PC-9 (cell line): ENCODE measurements at regions of chr20 and their contacts with region 1.

Region 1: DNA sequence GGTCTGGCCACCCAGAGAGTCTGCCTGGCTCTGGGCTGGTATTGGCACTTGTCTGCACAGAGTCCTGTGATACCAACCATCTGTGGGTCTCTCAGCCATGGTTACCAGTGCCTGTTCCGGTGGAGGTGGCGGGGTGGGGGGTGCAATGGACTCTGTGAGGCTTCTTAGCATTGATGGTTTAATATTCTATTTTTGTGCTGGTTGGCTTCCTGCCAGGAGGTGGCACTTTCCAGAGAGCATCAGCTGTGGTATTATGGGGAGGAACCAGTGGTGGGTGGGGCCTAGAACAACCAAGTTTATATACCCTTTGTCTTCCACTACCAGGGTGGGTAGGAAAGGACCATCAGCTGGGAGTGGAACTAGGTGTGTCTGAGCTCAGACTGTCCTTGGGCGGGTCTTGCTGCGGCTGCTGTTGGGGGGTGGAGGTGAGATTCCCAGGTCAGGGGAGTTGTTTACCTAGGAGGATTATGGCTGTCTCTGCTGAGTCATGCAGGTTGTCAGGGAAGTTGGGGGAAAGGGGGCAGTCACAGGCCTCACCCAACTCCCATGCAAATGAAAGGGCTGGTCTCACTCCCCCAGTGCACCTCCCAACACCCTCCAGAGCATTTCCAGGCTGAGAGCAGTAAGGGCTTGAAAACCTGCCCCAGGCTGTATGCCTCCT is 117.5 kb downstream of the FLRT3 start:
- DNase-seq: peak; percentile 84 to 92
- H3K4me3 ChIP-seq: peak overlapping the region; percentile 4; the same call in 1 of the 2 replicates
- H3K27ac ChIP-seq: peak overlapping the region; percentile 76
- H3K4me1 ChIP-seq: peaks cover 37% of the 10 kb centered on the region
- H3K27me3 ChIP-seq: no peaks in the 10 kb centered on the region
- CTCF ChIP-seq: no peak

Region 2: DNA sequence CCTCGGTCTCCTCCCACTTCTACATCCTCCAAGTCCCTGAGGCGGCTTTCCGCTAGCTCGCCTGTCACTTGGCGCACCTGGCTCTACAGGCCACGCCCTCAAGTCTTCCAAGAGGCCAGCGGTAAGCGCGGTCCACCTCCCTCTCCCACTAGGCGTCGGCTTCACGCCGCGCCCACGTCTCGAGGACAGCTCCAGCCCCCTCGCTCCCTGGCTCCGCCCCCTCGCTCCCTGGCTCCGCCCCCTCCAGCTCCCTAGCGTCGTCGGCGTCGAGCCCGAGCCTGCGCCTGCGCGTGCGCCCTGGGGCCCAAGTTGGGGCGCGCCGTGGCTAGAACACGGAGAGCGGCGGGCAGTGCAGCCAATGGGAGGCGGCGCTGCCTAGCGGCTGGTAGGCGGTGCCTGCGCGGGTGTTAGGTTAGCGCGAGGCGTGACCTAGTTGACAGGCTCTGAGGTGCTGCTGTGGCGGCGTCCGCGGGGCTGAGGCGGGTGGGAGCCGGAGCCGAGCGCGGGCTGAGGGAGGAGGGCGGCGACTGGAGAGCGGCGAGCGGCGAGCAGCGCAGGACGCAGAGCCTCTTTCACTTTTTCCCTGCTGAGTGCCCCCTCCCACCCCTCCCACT is 224.7 kb before region 1 on chr20 and contains the start of gene MACROD2:
- CTCF ChIA-PET with region 1: no interaction called
- POLR2A ChIA-PET with region 1: interaction called, 8 read pairs
- intact Hi-C with region 1: loop called (anchors 5 kb)
- DNase-seq: peak; percentile 91 to 99
- H3K4me3 ChIP-seq: peak within 1 kb of the TSS; percentile 66
- H3K27ac ChIP-seq: no peak within 1 kb of the TSS
- H3K4me1 ChIP-seq: peaks cover 10% of the 10 kb centered on the region
- H3K27me3 ChIP-seq: no peaks in the 10 kb centered on the region
- CTCF ChIP-seq: no peak
- total RNA-seq, gene MACROD2: 8.5 and 11.4 TPM in 2 replicates

Region 3: DNA sequence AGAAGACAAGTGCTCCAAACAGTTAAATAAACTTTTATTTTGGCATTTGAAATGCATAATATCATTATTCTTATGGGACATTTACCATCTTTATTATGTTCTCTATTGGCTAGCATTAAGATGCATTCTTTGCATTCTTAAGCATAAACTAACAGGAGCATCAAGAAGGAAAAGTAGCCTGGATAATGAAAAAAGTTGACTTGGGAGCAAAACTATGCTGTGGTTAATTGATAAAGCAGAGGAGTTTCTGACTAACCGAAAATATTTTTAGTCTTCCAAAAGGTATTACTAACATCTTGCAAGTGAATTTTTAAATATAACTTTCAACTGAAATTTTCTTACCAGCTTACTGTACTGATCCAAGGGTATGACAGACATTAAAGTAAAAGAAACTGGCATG is 22.8 kb before region 1 on chr20:
- CTCF ChIA-PET with region 1: no interaction called
- POLR2A ChIA-PET with region 1: interaction called, 14 read pairs
- intact Hi-C with region 1: no loop called
- DNase-seq: no peak
- H3K4me3 ChIP-seq: no peak overlapping the region
- H3K27ac ChIP-seq: no peak overlapping the region
- H3K4me1 ChIP-seq: peaks cover 3% of the 10 kb centered on the region; the same call in 1 of the 2 replicates
- H3K27me3 ChIP-seq: no peaks in the 10 kb centered on the region
- CTCF ChIP-seq: no peak

Region 4: DNA sequence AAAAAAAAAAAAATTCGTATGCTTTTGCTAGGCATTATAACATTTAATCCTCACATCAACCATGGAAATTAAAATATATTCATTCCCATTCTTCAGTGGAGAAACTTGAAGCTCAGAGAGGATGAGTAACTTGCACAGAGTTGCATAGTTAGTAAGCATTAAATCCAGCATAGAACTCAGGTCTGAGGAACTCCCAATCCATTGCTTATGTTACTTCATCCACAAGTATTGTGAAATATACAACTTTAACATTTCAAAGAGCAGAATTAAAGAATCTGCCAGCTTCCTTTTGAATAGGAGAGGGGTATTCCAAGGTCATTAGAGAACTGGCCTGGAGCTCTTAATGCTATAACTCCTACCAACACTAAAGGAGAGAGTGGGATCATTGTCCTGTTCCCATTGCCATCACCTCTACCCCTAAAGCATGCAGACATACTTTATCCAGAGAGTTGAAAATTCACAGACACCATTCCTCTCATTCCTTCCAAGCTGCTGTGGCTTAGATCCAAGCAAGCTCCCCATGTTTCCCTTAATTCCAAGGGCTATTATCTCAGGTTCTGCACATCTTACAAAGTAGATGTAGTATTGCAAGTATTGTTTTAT is 25.5 kb after region 1 on chr20:
- CTCF ChIA-PET with region 1: no interaction called
- POLR2A ChIA-PET with region 1: interaction called, 13 read pairs
- intact Hi-C with region 1: no loop called
- DNase-seq: no peak
- H3K4me3 ChIP-seq: no peak overlapping the region
- H3K27ac ChIP-seq: no peak overlapping the region
- H3K4me1 ChIP-seq: no peaks in the 10 kb centered on the region
- H3K27me3 ChIP-seq: no peaks in the 10 kb centered on the region
- CTCF ChIP-seq: no peak

Region 5: GRCh38 chr20:14331646-14332045 is 111.7 kb after region 1 on chr20:
- CTCF ChIA-PET with region 1: no interaction called
- POLR2A ChIA-PET with region 1: no interaction called
- intact Hi-C with region 1: no loop called
- DNase-seq: no peak
- H3K4me3 ChIP-seq: no peak overlapping the region
- H3K27ac ChIP-seq: no peak overlapping the region
- H3K4me1 ChIP-seq: peaks cover 8% of the 10 kb centered on the region; the same call in 1 of the 2 replicates
- H3K27me3 ChIP-seq: no peaks in the 10 kb centered on the region
- CTCF ChIP-seq: no peak

Region 6: GRCh38 chr20:15814911-15815310 is 1595.0 kb after region 1 on chr20:
- CTCF ChIA-PET with region 1: no interaction called
- POLR2A ChIA-PET with region 1: no interaction called
- intact Hi-C with region 1: loop called (anchors 10 kb)
- DNase-seq: peak in 1 of 2 experiments; percentile 87
- H3K4me3 ChIP-seq: no peak overlapping the region
- H3K27ac ChIP-seq: 0 out of 2 replicates have a peak overlapping the region, but pooled peaks have one; percentile 32
- H3K4me1 ChIP-seq: peaks cover 44% of the 10 kb centered on the region
- H3K27me3 ChIP-seq: no peaks in the 10 kb centered on the region
- CTCF ChIP-seq: no peak